ENCODE measurements at regions of chr9 and their contacts with region 1.

Region 1: GRCh38 chr9:112037281-112038016 is 137.6 kb downstream of the SUSD1 start:
- DNase-seq: no peak

Region 2: GRCh38 chr9:111975709-111976108 is 61.7 kb before region 1 on chr9:
- intact Hi-C with region 1: loop called in 1 of 2 experiments (anchors 10 kb)
- DNase-seq: no peak